ENCODE measurements at regions of chr6 and their contacts with region 1.

Region 1: GRCh38 chr6:144013486-144013909 is 5.4 kb upstream of the PLAGL1 start:
- DNase-seq: peak; percentile 71
- H3K4me3 Mint-ChIP-seq: no peak overlapping the region
- H3K27ac Mint-ChIP-seq: no peak overlapping the region
- H3K4me1 Mint-ChIP-seq: peaks cover 3% of the 10 kb centered on the region
- H3K27me3 Mint-ChIP-seq: peaks cover 7% of the 10 kb centered on the region

Region 2: GRCh38 chr6:143196525-143197215 is 816.8 kb before region 1 on chr6:
- CTCF ChIA-PET with region 1: no interaction called
- POLR2A ChIA-PET with region 1: no interaction called
- intact Hi-C with region 1: no loop called
- DNase-seq: no peak
- H3K4me3 Mint-ChIP-seq: no peak overlapping the region
- H3K27ac Mint-ChIP-seq: no peak overlapping the region
- H3K4me1 Mint-ChIP-seq: peaks cover 11% of the 10 kb centered on the region
- H3K27me3 Mint-ChIP-seq: no peaks in the 10 kb centered on the region

Region 3: DNA sequence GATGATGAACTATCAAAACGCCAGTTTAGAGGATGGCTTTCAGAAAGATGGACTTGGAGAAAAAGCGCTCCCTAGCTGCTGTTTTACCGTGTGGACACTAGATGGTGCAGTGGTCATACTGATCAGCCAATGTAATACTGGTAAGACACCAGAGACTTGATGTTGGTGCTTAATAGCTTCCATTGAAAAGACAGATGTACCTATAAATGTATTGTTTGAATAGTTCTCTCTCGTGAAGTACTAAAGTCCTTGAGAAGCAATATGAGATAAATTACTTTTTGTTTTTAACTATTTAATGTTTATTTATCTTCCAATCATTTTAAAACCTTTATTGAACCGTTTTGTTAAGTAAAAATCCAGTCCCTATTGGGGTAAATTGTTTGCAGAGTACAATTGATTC is 438.1 kb before region 1 on chr6:
- CTCF ChIA-PET with region 1: interaction called, 107 read pairs
- POLR2A ChIA-PET with region 1: interaction called, 4 read pairs
- intact Hi-C with region 1: loop called (anchors 1 kb)
- DNase-seq: peak; percentile 56
- H3K4me3 Mint-ChIP-seq: no peak overlapping the region
- H3K27ac Mint-ChIP-seq: no peak overlapping the region
- H3K4me1 Mint-ChIP-seq: peaks cover 10% of the 10 kb centered on the region
- H3K27me3 Mint-ChIP-seq: no peaks in the 10 kb centered on the region

Region 4: DNA sequence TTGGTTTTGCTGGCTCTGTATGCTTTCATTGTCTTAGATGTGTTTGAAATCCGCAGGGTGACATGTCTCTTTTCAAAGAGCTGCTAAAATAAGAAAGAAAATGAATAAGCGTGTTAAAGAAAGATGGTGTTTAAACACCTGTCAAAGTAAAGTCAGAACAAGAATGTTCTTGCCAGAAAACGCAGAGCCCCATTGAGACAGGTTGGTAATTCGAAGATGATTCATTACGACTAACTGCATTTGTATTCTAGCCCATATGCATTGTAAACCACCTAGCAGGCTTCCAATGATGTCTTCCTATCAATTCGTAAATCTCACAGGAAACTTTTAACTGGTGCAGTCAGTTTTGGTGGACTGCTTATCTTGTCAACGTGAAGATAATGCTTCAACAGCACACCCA is 318.9 kb before region 1 on chr6:
- CTCF ChIA-PET with region 1: no interaction called
- POLR2A ChIA-PET with region 1: no interaction called
- intact Hi-C with region 1: loop called (anchors 5 kb)
- DNase-seq: peak; percentile 18
- H3K4me3 Mint-ChIP-seq: no peak overlapping the region
- H3K27ac Mint-ChIP-seq: peak overlapping the region; percentile 11
- H3K4me1 Mint-ChIP-seq: peaks cover 61% of the 10 kb centered on the region
- H3K27me3 Mint-ChIP-seq: no peaks in the 10 kb centered on the region

Region 5: DNA sequence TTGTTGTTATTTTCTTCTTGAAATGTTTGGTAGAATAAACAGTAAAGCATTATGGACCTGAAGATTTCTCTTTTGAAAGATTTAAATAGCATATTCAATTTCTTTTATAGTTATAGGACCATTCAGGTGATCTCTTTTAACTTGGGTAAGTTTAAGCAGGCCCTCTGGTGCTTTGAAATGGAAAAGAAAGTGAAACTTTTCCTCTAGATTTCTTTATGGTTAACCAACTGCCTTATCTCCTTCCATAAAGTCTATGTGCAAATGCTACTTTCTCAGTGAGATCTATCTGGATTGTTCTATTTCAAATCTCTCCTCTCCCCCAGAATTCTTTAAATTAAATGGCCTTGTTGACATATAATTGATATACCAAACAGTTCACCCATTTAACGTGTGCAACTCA is 281.7 kb before region 1 on chr6:
- CTCF ChIA-PET with region 1: no interaction called
- POLR2A ChIA-PET with region 1: no interaction called
- intact Hi-C with region 1: no loop called
- DNase-seq: no peak
- H3K4me3 Mint-ChIP-seq: no peak overlapping the region
- H3K27ac Mint-ChIP-seq: no peak overlapping the region
- H3K4me1 Mint-ChIP-seq: peaks cover 42% of the 10 kb centered on the region
- H3K27me3 Mint-ChIP-seq: no peaks in the 10 kb centered on the region

Region 6: DNA sequence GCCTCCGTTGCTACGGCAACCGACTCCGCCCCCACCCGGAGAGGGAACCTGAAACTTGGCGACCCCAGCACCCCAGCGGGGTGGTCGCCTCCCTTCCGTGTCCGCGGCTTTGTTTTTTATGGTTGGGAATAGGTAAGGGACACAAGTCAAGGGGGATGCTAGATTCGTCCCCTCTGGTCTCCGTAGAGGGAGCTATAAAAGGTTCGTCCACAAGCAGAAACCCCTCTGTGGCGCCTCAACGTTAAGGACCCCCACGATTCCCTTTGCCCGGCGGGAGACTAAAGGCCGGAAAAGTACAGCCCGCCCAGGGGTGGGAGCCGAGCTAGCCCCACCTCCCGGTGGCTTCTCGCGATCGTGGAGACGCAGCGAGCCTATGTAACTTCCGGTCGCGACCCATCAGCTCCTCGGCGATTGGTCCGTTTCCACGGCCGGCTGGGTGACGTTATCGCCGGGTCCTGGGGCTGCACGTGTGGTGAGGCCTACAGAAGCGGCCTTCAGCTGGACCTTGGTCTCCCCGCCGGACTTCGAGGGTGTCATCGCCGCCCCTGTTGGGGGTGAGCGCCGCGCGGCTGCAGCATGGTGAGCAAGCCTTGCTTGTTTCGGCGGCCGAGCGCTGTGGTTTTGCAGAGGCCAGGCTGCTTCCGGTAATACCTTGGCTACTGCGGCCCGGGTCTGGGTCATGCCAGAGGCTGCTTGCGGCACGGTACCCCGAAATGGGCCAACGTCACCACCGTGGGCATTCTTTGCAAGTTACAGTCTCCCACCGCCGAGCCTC is 170.4 kb before region 1 on chr6 and contains the start of gene LTV1:
- CTCF ChIA-PET with region 1: interaction called, 20 read pairs
- POLR2A ChIA-PET with region 1: no interaction called
- intact Hi-C with region 1: no loop called
- DNase-seq: peak; percentile 96
- H3K4me3 Mint-ChIP-seq: peak within 1 kb of the TSS; percentile 93
- H3K27ac Mint-ChIP-seq: peak within 1 kb of the TSS; percentile 93
- H3K4me1 Mint-ChIP-seq: peaks cover 25% of the 10 kb centered on the region
- H3K27me3 Mint-ChIP-seq: no peaks in the 10 kb centered on the region
- total RNA-seq, gene LTV1: 33.5 to 35.4 TPM

Region 7: GRCh38 chr6:143986463-143987065 is 26.9 kb before region 1 on chr6:
- CTCF ChIA-PET with region 1: interaction called, 12 read pairs
- POLR2A ChIA-PET with region 1: no interaction called
- intact Hi-C with region 1: no loop called
- DNase-seq: no peak
- H3K4me3 Mint-ChIP-seq: no peak overlapping the region
- H3K27ac Mint-ChIP-seq: no peak overlapping the region
- H3K4me1 Mint-ChIP-seq: no peaks in the 10 kb centered on the region
- H3K27me3 Mint-ChIP-seq: peaks cover 2% of the 10 kb centered on the region

Region 8: DNA sequence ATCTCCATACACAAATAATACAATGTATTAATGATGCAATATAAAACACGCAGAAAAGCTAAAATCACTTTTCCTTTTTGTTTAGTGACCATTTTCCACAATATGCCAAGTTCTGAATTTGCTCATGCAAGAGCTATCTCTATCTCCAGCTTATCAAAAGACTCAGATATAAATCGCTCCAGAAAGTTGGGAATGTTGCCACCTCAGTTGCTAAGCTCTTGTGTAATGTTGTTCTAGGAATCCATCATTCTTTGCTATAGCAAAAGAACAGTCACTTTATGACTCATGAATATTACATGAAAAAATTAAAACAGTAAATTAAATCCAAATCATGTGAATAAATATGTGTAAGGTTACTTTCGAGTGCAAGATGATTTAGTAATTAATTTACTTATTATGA is 14.1 kb before region 1 on chr6:
- CTCF ChIA-PET with region 1: interaction called, 14 read pairs
- POLR2A ChIA-PET with region 1: no interaction called
- intact Hi-C with region 1: no loop called
- DNase-seq: no peak
- H3K4me3 Mint-ChIP-seq: no peak overlapping the region
- H3K27ac Mint-ChIP-seq: no peak overlapping the region
- H3K4me1 Mint-ChIP-seq: no peaks in the 10 kb centered on the region
- H3K27me3 Mint-ChIP-seq: peaks cover 1% of the 10 kb centered on the region